ENCODE measurements at regions of chr22 and their contacts with region 1.

Region 1: GRCh38 chr22:45757068-45757467 is 85.4 kb downstream of the ATXN10 start:
- DNase-seq: no peak
- ATAC-seq: peak in 2 of 4 donors; percentile 13 to 17
- H3K4me3 ChIP-seq: no peak overlapping the region
- H3K27ac ChIP-seq: no peak overlapping the region
- H3K4me1 ChIP-seq: peaks cover 4% of the 10 kb centered on the region
- H3K27me3 ChIP-seq: no peaks in the 10 kb centered on the region
- CTCF ChIP-seq: no peak

Region 2: DNA sequence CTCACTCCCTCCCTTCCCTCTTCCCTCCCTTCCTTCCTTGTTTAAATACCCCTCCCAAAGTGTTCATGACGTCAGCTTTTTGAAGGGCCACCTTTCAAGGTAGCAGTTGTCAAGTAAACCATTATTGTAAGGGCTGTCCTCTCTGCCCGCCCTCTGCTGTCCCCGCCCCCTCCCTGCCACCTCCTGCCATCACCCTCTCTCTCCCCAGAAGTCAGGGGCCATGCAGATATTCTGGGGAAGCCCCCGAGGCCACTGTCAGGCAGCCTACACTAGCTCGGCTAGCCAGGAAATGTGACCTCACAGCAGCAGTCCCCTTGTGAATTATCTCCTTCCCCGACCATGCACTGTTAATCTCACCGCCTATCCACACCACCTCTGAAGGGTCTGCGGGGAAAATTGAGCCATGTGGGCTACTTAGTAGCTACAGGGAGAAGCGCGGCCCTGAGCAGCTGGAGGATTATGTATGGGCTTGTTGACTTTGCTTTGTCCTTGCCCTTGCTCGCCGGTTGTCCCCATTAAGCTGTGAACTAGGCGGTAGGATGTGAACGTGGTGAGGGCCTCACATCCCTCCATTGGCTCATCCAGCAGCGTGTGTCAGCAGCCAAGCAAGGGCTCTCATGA is 127.5 kb before region 1 on chr22:
- intact Hi-C with region 1: no loop called
- DNase-seq: no peak
- ATAC-seq: no peak
- H3K4me3 ChIP-seq: no peak overlapping the region
- H3K27ac ChIP-seq: no peak overlapping the region
- H3K4me1 ChIP-seq: no peaks in the 10 kb centered on the region
- H3K27me3 ChIP-seq: peaks cover 0 to 33% (median 1%) of the 10 kb centered on the region in 3 donors
- CTCF ChIP-seq: no peak

Region 3: DNA sequence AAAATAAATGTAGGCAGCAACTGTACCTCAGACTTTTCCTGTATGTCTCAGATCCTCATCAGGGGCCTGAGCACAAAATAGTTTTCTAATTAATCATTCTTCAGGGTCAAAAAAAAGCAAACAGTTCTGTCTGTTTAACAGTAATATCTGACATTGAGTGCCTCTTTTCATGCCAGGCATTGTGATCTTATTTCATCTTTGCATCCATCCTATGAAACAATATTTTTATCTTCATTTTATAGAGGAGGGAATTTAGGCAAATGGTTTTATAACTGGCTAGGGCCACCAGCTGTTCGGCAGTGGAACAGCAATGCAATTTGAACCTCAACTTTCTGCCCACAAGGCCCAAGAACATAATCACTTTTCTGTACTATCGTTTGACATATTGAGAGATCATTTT is 74.3 kb after region 1 on chr22:
- intact Hi-C with region 1: loop called in 1 of 2 experiments (anchors 10 kb)
- DNase-seq: no peak
- ATAC-seq: peak in 1 of 4 donors; percentile 27
- H3K4me3 ChIP-seq: no peak overlapping the region
- H3K27ac ChIP-seq: no peak overlapping the region
- H3K4me1 ChIP-seq: no peaks in the 10 kb centered on the region
- H3K27me3 ChIP-seq: no peaks in the 10 kb centered on the region
- CTCF ChIP-seq: peak; percentile 13